CD8-positive, alpha-beta T cell (primary cell): ENCODE measurements at regions of chr18 and their contacts with region 1.

Region 1: GRCh38 chr18:31942999-31943865 is at the start of gene TRAPPC8:
- DNase-seq: peak; percentile 80 to 97 (median 90)
- ATAC-seq: peak; percentile 87
- H3K4me3 ChIP-seq: peak within 1 kb of the TSS; percentile 97 to 98
- H3K4me3 Mint-ChIP-seq: peak within 1 kb of the TSS; percentile 99
- H3K27ac ChIP-seq: peak within 1 kb of the TSS; percentile 90 to 98
- H3K27ac Mint-ChIP-seq: peak within 1 kb of the TSS; percentile 98
- H3K4me1 ChIP-seq: peaks cover 25% of the 10 kb centered on the region
- H3K4me1 Mint-ChIP-seq: peaks cover 46% of the 10 kb centered on the region
- H3K27me3 ChIP-seq: no peaks in the 10 kb centered on the region
- H3K27me3 Mint-ChIP-seq: no peaks in the 10 kb centered on the region
- CTCF ChIP-seq: no peak
- total RNA-seq, gene TRAPPC8: 23.6 to 24.9 TPM

Region 2: DNA sequence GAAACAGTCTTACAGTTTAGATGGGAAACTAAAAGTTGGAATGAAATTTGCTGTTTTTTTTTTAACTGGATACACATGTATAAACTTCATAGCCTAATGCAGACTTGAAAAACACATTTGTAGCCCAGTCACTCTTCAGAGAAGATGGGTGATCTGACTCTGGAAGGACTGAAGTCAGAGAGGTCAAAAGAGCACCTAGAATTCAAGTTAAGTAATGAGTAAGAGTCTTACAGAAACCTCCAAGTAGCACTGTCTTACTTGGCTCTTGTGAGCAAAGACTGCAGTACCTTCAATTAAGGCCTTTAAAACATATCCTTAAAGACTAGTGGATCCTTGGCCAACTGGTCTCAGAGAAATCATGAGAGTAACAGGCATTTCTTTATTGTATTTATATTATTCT is 42.2 kb before region 1 on chr18:
- CTCF ChIA-PET with region 1: no interaction called
- POLR2A ChIA-PET with region 1: no interaction called
- intact Hi-C with region 1: no loop called
- DNase-seq: no peak
- ATAC-seq: no peak
- H3K4me3 ChIP-seq: no peak overlapping the region
- H3K4me3 Mint-ChIP-seq: no peak overlapping the region
- H3K27ac ChIP-seq: no peak overlapping the region
- H3K27ac Mint-ChIP-seq: no peak overlapping the region
- H3K4me1 ChIP-seq: no peaks in the 10 kb centered on the region
- H3K4me1 Mint-ChIP-seq: peaks cover 3% of the 10 kb centered on the region
- H3K27me3 ChIP-seq: no peaks in the 10 kb centered on the region
- H3K27me3 Mint-ChIP-seq: no peaks in the 10 kb centered on the region
- CTCF ChIP-seq: no peak

Region 3: GRCh38 chr18:31977270-31977872 is 34.1 kb after region 1 on chr18:
- CTCF ChIA-PET with region 1: interaction called, 5 read pairs
- POLR2A ChIA-PET with region 1: interaction called, 3 read pairs
- intact Hi-C with region 1: loop called in 1 of 2 experiments (anchors 1 kb)
- DNase-seq: peak in 5 of 9 experiments; percentile 15 to 65 (median 41)
- ATAC-seq: no peak
- H3K4me3 ChIP-seq: no peak overlapping the region
- H3K4me3 Mint-ChIP-seq: no peak overlapping the region
- H3K27ac ChIP-seq: no peak overlapping the region
- H3K27ac Mint-ChIP-seq: no peak overlapping the region
- H3K4me1 ChIP-seq: no peaks in the 10 kb centered on the region
- H3K4me1 Mint-ChIP-seq: peaks cover 1% of the 10 kb centered on the region
- H3K27me3 ChIP-seq: no peaks in the 10 kb centered on the region
- H3K27me3 Mint-ChIP-seq: no peaks in the 10 kb centered on the region
- CTCF ChIP-seq: peak; percentile 62

Region 4: DNA sequence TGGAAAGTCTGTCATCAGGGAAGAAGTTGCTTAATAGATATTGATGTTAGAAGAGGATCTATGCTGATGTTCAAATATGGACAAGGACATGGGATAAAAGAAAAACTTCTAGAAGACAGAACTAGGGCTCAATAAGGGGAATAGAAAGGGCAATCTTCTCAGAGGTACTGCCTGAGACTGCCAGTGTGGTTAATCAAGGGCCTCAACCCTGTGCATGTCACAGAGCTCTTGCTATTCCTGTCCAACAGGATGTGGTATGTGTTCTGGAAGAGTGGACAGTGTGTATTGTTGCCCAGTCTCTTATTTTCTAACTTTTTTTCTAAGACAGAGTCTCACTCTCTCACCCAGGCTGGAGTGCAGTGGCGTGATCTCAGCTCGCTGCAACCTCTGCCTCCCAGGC is 47.6 kb after region 1 on chr18:
- CTCF ChIA-PET with region 1: no interaction called
- POLR2A ChIA-PET with region 1: no interaction called
- intact Hi-C with region 1: no loop called
- DNase-seq: no peak
- ATAC-seq: no peak
- H3K4me3 ChIP-seq: no peak overlapping the region
- H3K4me3 Mint-ChIP-seq: no peak overlapping the region
- H3K27ac ChIP-seq: no peak overlapping the region
- H3K27ac Mint-ChIP-seq: no peak overlapping the region
- H3K4me1 ChIP-seq: no peaks in the 10 kb centered on the region
- H3K4me1 Mint-ChIP-seq: no peaks in the 10 kb centered on the region
- H3K27me3 ChIP-seq: no peaks in the 10 kb centered on the region
- H3K27me3 Mint-ChIP-seq: no peaks in the 10 kb centered on the region
- CTCF ChIP-seq: no peak

Region 5: DNA sequence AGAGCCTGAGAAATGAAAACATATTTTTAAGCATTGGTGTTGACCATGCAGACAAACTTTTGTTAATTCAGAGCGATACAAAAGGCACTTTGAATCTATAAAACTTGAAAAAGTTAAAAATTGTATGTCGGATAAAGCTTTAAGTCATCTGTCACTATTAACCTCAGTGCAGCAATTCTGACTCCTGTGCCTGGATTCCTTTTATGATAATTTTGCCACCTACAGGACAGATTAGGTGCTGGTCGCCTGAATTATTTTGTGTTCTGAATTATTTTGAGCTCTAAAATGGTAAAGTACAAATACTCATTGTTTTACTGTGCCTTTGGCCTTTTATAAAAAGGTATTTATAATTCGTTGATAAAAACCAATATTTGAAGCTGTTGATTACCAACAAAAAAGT is 129.1 kb after region 1 on chr18:
- CTCF ChIA-PET with region 1: interaction called, 16 read pairs
- POLR2A ChIA-PET with region 1: no interaction called
- intact Hi-C with region 1: loop called (anchors 1 to 5 kb)
- DNase-seq: peak in 2 of 9 experiments; percentile 50 to 65
- ATAC-seq: peak; percentile 48
- H3K4me3 ChIP-seq: no peak overlapping the region
- H3K4me3 Mint-ChIP-seq: no peak overlapping the region
- H3K27ac ChIP-seq: no peak overlapping the region
- H3K27ac Mint-ChIP-seq: no peak overlapping the region
- H3K4me1 ChIP-seq: no peaks in the 10 kb centered on the region
- H3K4me1 Mint-ChIP-seq: peaks cover 17% of the 10 kb centered on the region
- H3K27me3 ChIP-seq: no peaks in the 10 kb centered on the region
- H3K27me3 Mint-ChIP-seq: no peaks in the 10 kb centered on the region
- CTCF ChIP-seq: peak; percentile 65